ENCODE measurements at regions of chr19 and their contacts with region 1.

Region 1: GRCh38 chr19:43446746-43447489 is 18.5 kb downstream of the LYPD3 start:
- DNase-seq: peak; percentile 90
- ATAC-seq: peak; percentile 81
- H3K4me3 Mint-ChIP-seq: no peak overlapping the region
- H3K27ac Mint-ChIP-seq: no peak overlapping the region
- H3K4me1 Mint-ChIP-seq: peaks cover 27% of the 10 kb centered on the region
- H3K27me3 Mint-ChIP-seq: no peaks in the 10 kb centered on the region

Region 2: DNA sequence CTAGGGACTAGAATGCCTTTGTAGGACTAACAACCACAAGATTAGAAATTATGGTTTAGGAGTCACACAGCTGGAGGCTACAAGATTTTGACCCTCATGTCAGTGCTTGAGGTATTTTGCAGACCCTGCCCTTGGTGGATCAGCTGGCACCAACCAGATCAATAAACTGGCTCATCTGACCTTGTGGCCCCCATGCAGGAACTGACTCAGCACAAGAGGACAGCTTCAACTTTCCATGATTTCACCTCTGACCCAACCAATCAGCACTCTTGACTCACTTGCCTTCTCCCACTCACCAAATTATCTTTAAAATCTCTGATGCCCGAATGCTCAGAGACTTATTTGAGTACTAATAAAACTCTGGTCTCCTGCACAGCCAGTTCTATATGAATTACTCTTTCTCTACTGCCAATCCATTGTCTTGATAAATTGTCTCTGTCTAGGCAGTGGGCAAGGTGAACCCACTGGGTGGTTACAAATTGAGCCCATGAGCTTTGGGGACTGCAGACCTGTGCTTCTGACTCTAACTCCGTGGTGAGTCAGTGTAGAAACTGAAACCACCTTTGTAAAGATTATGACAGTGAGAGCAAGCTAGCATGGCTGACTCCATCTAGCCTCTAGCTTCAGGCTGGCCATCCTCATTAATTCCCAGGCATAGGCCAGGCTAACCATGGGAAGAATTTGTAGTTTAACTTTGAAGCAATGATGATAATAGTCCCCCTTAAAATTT is 818.3 kb before region 1 on chr19:
- CTCF ChIA-PET with region 1: no interaction called
- POLR2A ChIA-PET with region 1: no interaction called
- intact Hi-C with region 1: no loop called
- DNase-seq: peak; percentile 40
- ATAC-seq: peak; percentile 97
- H3K4me3 Mint-ChIP-seq: no peak overlapping the region
- H3K27ac Mint-ChIP-seq: peak overlapping the region; percentile 43
- H3K4me1 Mint-ChIP-seq: peaks cover 16% of the 10 kb centered on the region
- H3K27me3 Mint-ChIP-seq: peaks cover 19% of the 10 kb centered on the region

Region 3: GRCh38 chr19:43463381-43464136 is 16.6 kb after region 1 on chr19:
- CTCF ChIA-PET with region 1: interaction called, 44 read pairs
- POLR2A ChIA-PET with region 1: no interaction called
- intact Hi-C with region 1: no loop called
- DNase-seq: peak; percentile 100
- ATAC-seq: peak; percentile 90
- H3K4me3 Mint-ChIP-seq: peak overlapping the region; percentile 87
- H3K27ac Mint-ChIP-seq: peak overlapping the region; percentile 93
- H3K4me1 Mint-ChIP-seq: peaks cover 48% of the 10 kb centered on the region
- H3K27me3 Mint-ChIP-seq: no peaks in the 10 kb centered on the region

Region 4: GRCh38 chr19:43495082-43495481 is 48.2 kb after region 1 on chr19:
- CTCF ChIA-PET with region 1: interaction called, 10 read pairs
- POLR2A ChIA-PET with region 1: no interaction called
- intact Hi-C with region 1: loop called in 1 of 2 experiments (anchors 5 kb)
- DNase-seq: no peak
- ATAC-seq: no peak
- H3K4me3 Mint-ChIP-seq: no peak overlapping the region
- H3K27ac Mint-ChIP-seq: no peak overlapping the region
- H3K4me1 Mint-ChIP-seq: no peaks in the 10 kb centered on the region
- H3K27me3 Mint-ChIP-seq: no peaks in the 10 kb centered on the region

Region 5: GRCh38 chr19:43519436-43520088 is 72.6 kb after region 1 on chr19:
- CTCF ChIA-PET with region 1: interaction called, 184 read pairs
- POLR2A ChIA-PET with region 1: interaction called, 9 read pairs
- intact Hi-C with region 1: loop called (anchors 1 kb)
- DNase-seq: peak; percentile 90
- ATAC-seq: peak; percentile 100
- H3K4me3 Mint-ChIP-seq: no peak overlapping the region
- H3K27ac Mint-ChIP-seq: peak overlapping the region; percentile 19
- H3K4me1 Mint-ChIP-seq: peaks cover 17% of the 10 kb centered on the region
- H3K27me3 Mint-ChIP-seq: no peaks in the 10 kb centered on the region

Region 6: DNA sequence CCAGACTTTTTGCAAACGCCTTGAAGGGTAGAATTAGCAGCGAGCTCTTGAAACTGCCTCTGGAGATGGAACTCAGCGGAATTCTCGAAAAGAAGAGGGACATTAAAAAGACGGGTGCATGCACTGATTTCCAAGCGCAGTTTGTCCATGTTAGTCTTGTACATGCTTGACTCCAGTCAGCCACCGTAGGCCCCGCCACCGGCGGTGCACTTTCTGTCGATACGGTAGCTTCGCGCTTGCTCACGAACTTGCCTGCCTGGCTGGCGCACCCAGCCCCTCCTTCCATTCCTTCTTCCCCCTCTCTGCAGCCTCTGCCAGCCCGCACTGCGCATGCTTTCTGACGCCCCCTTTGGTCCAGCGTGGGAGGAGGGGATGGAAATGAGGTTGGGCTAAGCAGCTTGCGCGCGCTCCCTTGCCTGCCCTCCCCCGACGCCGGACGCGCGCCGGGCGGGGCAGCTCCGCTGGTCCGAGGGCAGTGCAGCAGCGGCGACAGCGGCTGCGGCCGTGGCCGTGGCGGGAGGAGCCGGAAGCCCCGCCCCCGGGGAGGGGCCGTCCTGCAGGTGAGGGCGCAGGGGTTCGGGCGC is 86.1 kb after region 1 on chr19 and contains the start of gene ZNF575:
- CTCF ChIA-PET with region 1: interaction called, 12 read pairs
- POLR2A ChIA-PET with region 1: no interaction called
- intact Hi-C with region 1: no loop called
- DNase-seq: peak; percentile 95
- ATAC-seq: peak; percentile 57
- H3K4me3 Mint-ChIP-seq: peak within 1 kb of the TSS; percentile 83
- H3K27ac Mint-ChIP-seq: peak within 1 kb of the TSS; percentile 97
- H3K4me1 Mint-ChIP-seq: peaks cover 20% of the 10 kb centered on the region
- H3K27me3 Mint-ChIP-seq: no peaks in the 10 kb centered on the region
- total RNA-seq, gene ZNF575: 3.4 to 4.3 TPM

Region 7: GRCh38 chr19:43789029-43789428 is 342.1 kb after region 1 on chr19:
- CTCF ChIA-PET with region 1: no interaction called
- POLR2A ChIA-PET with region 1: no interaction called
- intact Hi-C with region 1: no loop called
- DNase-seq: peak; percentile 35
- ATAC-seq: no peak
- H3K4me3 Mint-ChIP-seq: no peak overlapping the region
- H3K27ac Mint-ChIP-seq: no peak overlapping the region
- H3K4me1 Mint-ChIP-seq: peaks cover 12% of the 10 kb centered on the region
- H3K27me3 Mint-ChIP-seq: peaks cover 14% of the 10 kb centered on the region

Region 8: DNA sequence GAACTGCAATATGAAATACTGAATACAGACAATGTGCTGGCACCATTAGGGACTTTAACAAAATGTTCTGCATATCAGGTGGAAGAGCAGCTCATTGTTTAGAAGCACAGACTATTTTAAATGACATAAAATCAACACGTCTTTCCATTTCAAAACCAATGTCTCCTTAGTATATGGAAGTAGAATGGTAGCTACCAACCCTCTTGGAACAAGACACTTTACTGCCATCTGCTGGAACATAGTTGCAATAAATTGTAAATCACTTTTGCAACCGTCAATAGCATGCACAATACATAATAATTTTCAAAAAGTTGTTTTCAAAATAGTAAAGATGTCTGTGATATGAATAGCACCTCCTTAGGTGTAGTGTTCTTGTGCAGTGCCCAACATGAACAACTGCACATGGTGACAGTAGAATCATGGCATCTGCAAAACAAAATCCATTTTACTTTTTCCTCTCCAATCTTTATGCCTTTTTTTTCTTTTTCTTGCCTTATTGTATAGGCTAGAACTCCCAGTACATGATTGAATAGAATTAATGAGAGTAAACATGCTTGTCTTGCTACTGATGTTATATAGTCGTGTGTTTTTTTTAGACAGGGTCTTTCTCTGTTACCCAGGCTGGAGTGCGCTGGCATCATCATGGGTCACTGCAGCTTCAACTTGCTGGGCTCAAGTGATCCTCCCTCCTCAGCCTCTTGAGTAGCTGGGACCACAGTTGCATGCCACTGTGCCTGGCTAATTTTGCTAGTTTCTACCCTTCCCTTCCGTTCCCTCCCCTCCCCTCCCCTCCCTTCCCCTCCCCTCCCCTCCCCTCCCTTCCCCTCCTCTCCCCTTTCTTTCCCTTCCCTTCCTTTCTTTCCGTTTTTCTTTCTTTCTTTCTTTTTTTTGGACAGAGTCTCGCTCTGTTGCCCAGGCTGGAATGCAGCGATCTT is 363.1 kb after region 1 on chr19:
- CTCF ChIA-PET with region 1: interaction called, 3 read pairs
- POLR2A ChIA-PET with region 1: no interaction called
- intact Hi-C with region 1: loop called in 1 of 2 experiments (anchors 10 kb)
- DNase-seq: no peak
- ATAC-seq: peak; percentile 83
- H3K4me3 Mint-ChIP-seq: no peak overlapping the region
- H3K27ac Mint-ChIP-seq: no peak overlapping the region
- H3K4me1 Mint-ChIP-seq: no peaks in the 10 kb centered on the region
- H3K27me3 Mint-ChIP-seq: peaks cover 8% of the 10 kb centered on the region